ENCODE measurements at regions of chr17 and their contacts with region 1.

Region 1: DNA sequence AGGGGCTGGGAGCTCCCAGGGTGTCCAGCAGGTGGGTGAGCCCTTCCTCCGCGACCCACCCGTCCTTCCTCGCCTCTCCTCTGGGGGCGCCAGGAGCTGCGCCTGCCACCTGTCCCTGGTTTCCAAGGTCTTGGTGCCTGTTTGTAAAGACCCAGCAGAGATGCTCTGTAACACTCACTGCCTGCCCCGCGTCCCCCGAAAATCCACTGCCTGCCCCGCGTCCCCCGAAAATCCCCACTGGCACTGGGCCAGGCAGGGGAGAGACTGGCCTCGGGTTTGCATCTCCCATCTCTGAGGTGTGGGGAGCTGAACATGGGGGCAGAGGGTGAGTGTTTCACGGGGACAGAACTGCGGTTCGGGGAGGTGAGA is 45.6 kb downstream of the BAHCC1 start:
- DNase-seq: peak; percentile 98
- H3K4me3 ChIP-seq: no peak overlapping the region; a peak in 1 of 4 replicates
- H3K27ac ChIP-seq: no peak overlapping the region
- H3K4me1 ChIP-seq: peaks cover 0 to 29% of the 10 kb centered on the region in 2 experiments; a peak in 1 of 4 replicates
- H3K27me3 ChIP-seq: no peaks in the 10 kb centered on the region
- CTCF ChIP-seq: peak; percentile 81
- EP300 ChIP-seq: no peak
- RAD21 ChIP-seq: peak; percentile 77

Region 2: GRCh38 chr17:81302861-81303333 is 138.0 kb before region 1 on chr17:
- CTCF ChIA-PET with region 1: interaction called, 13 read pairs
- POLR2A ChIA-PET with region 1: no interaction called
- DNase-seq: peak; percentile 87
- H3K4me3 ChIP-seq: no peak overlapping the region
- H3K27ac ChIP-seq: peak overlapping the region in 1 of 2 experiments; percentile 24; a peak in 1 of 4 replicates
- H3K4me1 ChIP-seq: peaks cover 0 to 45% of the 10 kb centered on the region in 2 experiments; a peak in 1 of 4 replicates
- H3K27me3 ChIP-seq: no peaks in the 10 kb centered on the region
- CTCF ChIP-seq: no peak
- EP300 ChIP-seq: no peak
- RAD21 ChIP-seq: peak; percentile 63

Region 3: DNA sequence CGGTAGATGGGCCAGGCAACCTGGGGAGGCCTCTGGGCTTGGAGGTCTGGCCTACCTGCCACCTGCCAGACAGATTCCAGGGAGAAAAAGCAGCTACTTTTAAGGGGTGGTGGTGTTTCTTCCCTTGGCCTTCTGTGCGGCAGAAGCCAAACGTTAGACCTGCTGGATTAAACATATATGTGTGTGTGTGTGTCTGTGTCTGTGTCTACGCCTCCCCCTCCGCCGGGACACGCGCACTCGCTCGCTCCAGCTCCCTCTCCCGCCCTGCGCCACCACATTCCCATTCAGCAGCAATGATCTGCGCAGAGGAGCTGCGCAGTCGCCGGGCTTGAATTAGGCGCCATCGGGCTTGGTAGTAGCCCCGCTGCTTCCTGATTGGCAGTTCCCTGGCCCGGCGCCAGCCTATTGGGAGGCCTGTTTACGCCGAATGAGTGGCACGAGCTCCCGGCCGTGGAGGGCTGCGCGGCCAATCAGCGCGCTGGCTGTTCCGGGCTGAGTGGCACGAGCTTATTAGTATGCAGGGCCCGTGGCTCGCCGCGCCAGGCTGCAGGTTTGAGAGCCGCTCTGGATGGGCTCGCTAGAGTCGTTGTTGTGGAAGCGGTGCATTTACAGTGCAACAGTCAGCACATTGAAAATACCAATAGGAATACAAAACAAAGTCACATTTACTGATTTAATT is 45.8 kb before region 1 on chr17 and contains the start of gene BAHCC1:
- CTCF ChIA-PET with region 1: interaction called, 23 read pairs
- POLR2A ChIA-PET with region 1: interaction called, 14 read pairs
- DNase-seq: peak; percentile 97
- H3K4me3 ChIP-seq: peak within 1 kb of the TSS; percentile 60 to 80
- H3K27ac ChIP-seq: peak within 1 kb of the TSS; percentile 83 to 89
- H3K4me1 ChIP-seq: peaks cover 31 to 68% of the 10 kb centered on the region in 2 experiments
- H3K27me3 ChIP-seq: no peaks in the 10 kb centered on the region
- CTCF ChIP-seq: no peak
- EP300 ChIP-seq: peak in 1 of 2 experiments; percentile 51; a peak in 1 of 4 replicates
- RAD21 ChIP-seq: no peak; the same call in 1 of the 2 replicates
- polyA plus RNA-seq, gene BAHCC1: 3.6 and 6.4 TPM in 2 replicates

Region 4: DNA sequence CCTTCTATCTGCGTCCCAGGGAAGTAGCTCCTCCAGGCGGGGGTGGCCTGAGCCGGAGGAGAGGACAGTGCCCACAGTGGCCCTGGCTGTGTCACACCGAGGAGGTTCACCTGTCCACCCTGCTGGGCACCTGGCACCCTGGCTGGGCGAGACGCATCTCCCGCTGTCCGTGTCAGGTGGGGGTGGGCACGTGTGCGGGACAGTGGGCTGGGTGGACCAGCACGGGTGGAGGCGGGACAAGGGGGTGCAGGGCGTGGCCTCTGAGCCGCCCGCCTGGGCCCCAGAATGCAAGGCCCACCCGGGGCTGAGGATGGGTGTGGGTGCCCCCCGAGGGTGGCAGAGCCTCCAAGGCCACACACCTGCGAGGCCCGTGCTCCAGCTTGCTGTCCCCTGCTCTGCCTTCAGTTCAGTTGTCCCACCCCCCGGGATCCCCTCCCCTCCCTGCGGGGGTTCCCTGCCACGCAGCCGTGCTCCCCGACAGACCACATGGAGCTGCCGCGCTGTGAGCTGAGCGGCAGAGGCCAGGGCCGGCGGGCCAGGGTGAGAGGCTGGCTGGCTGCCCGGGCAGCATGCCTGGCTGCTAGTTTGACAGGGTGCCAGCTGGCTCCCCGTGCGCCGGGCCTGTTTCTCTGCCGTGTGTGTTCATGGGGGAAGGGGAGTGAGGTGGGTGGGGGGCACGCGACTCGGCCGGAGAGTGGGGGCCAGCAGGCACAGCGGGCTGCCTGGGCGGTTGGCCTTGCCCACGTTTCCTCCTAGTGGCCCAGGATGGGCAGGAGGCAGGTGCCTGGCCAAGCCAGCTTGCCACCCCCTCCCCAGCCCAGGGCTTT is 11.7 kb before region 1 on chr17:
- CTCF ChIA-PET with region 1: interaction called, 73 read pairs
- POLR2A ChIA-PET with region 1: interaction called, 3 read pairs
- DNase-seq: peak; percentile 97
- H3K4me3 ChIP-seq: peak overlapping the region in 1 of 2 experiments; percentile 4; a peak in 1 of 4 replicates
- H3K27ac ChIP-seq: peak overlapping the region; percentile 15 to 78; a peak in 3 of 4 replicates
- H3K4me1 ChIP-seq: peaks cover 21 to 51% of the 10 kb centered on the region in 2 experiments; a peak in 3 of 4 replicates
- H3K27me3 ChIP-seq: no peaks in the 10 kb centered on the region
- CTCF ChIP-seq: no peak
- EP300 ChIP-seq: peak in 1 of 2 experiments; percentile 82; a peak in 3 of 4 replicates
- RAD21 ChIP-seq: no peak

Region 5: DNA sequence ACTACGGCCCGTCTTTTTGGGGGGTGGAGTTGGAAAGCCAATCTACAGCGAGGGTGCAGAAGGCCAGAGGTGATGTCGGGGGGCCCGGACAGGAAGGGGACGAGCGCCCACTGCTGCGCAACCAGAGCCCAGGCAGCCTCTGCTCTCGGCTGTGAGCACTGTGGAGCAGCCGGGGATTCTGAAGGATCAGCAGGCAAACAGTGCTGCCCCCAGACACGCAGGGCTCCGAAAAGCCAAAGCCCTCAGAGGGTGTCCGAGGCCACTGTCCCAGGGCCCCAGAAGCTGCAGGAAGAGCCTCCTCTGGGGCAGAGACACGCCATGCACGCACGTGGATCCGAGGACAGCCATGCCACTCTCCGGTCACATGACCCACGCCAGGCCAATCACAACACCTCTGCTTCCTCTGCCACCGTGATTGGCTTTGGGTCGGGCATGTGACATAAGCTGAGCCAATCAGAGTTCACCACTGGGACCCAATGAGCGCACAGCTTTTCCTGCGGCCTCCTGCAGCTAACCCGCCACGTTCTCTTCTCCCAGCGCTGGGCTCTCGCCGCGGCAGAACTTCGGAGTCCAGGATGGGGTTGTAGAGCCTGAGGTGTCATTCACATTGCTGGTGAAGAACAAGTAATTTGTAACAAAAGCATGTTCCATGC is 31.1 kb after region 1 on chr17:
- CTCF ChIA-PET with region 1: interaction called, 28 read pairs
- POLR2A ChIA-PET with region 1: no interaction called
- DNase-seq: peak; percentile 97
- H3K4me3 ChIP-seq: peak overlapping the region in 1 of 2 experiments; percentile 7; a peak in 1 of 4 replicates
- H3K27ac ChIP-seq: peak overlapping the region in 1 of 2 experiments; percentile 31; a peak in 2 of 4 replicates
- H3K4me1 ChIP-seq: peaks cover 0 to 17% of the 10 kb centered on the region in 2 experiments; a peak in 1 of 4 replicates
- H3K27me3 ChIP-seq: no peaks in the 10 kb centered on the region
- CTCF ChIP-seq: no peak
- EP300 ChIP-seq: 0 out of 4 replicates have a peak, but pooled peaks of 1 of the 2 experiments have one; percentile 12
- RAD21 ChIP-seq: peak; percentile 43

Region 6: DNA sequence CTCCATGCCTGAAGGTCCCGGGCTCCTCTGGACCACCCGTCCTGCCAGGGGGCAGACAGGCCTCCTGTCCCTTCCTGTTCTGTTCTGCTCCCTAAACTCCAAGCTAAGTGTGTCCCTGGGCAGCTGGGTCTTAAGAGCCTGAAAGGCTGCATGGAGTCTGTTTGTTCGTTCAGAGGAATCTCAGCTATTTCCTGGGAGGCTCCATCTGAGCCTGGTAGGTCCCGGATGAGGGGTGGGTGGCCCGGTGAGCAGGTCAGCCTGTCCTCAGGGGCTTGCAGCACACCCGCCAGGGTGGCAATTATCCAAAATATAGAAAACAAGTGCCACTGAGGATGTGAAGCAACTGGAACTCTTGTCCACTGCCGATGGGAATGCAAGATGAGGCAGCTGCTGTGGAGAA is 59.2 kb after region 1 on chr17:
- CTCF ChIA-PET with region 1: no interaction called
- POLR2A ChIA-PET with region 1: no interaction called
- DNase-seq: no peak
- H3K4me3 ChIP-seq: no peak overlapping the region
- H3K27ac ChIP-seq: no peak overlapping the region
- H3K4me1 ChIP-seq: no peaks in the 10 kb centered on the region; a peak in 1 of 4 replicates
- H3K27me3 ChIP-seq: no peaks in the 10 kb centered on the region
- CTCF ChIP-seq: no peak
- EP300 ChIP-seq: no peak
- RAD21 ChIP-seq: no peak